ENCODE measurements at regions of chr9 and their contacts with region 1.

Region 1: GRCh38 chr9:133417541-133418461 is at the start of gene REXO4:
- DNase-seq: peak; percentile 86 to 95
- H3K4me3 ChIP-seq: peak within 1 kb of the TSS; percentile 83 to 96 (median 92)
- H3K27ac ChIP-seq: peak within 1 kb of the TSS; percentile 92
- H3K4me1 ChIP-seq: peaks cover 0 to 20% (median 5%) of the 10 kb centered on the region in 4 experiments; a peak in 4 of 7 replicates
- H3K27me3 ChIP-seq: no peaks in the 10 kb centered on the region; a peak in 1 of 7 replicates
- CTCF ChIP-seq: no peak
- EP300 ChIP-seq: no peak
- POLR2A ChIP-seq: peak in 1 of 2 experiments; percentile 58; a peak in 2 of 3 replicates
- RAD21 ChIP-seq: no peak
- total RNA-seq, gene REXO4: 37.7 and 38.3 TPM in 2 replicates

Region 2: DNA sequence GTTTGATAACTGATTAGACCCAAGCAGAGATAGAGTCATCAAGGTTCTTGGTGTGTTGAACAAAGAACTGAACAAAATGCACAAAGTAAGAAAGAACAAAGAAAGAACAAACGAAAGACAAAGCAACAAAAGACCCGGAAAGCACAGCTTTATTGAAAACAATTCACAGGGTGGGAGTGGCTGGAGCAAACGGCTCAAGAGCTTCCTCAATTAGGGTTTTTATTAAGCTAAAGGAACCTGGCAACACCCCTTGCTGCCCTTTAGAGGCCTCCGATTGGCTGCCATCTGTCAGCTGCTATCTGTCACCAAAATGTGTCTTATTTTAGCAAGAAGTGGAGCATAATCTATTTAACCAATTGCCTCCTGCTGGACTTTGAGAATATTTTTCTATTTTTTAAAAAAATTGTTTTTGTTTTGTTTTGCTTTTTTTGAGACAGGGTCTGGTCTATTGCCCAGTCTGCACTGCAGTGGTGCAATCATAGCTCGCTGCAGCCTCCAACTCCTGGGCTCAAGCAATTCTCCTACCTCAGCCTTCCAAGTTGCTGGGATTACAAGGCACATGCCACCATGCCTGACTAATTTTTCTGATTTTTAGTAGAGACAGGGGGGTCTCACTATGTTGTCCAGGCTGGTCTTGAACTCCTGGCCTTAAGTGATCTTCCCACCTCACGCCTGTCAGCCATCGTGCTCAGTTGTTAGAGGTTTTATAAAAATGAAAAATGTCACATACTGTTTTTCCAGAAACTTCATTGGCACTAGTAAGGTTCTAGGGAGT is 135.2 kb before region 1 on chr9:
- CTCF ChIA-PET with region 1: no interaction called
- POLR2A ChIA-PET with region 1: no interaction called
- DNase-seq: no peak
- H3K4me3 ChIP-seq: no peak overlapping the region
- H3K27ac ChIP-seq: no peak overlapping the region
- H3K4me1 ChIP-seq: no peaks in the 10 kb centered on the region
- H3K27me3 ChIP-seq: peaks cover under 1 to 6% (median 4%) of the 10 kb centered on the region in 4 experiments; a peak in 3 of 7 replicates
- CTCF ChIP-seq: no peak
- EP300 ChIP-seq: no peak
- POLR2A ChIP-seq: no peak
- RAD21 ChIP-seq: no peak

Region 3: GRCh38 chr9:133347985-133348717 is 69.7 kb before region 1 on chr9 and contains the starts of genes MED22 and RPL7A:
- CTCF ChIA-PET with region 1: interaction called, 4 read pairs
- POLR2A ChIA-PET with region 1: interaction called, 29 read pairs
- DNase-seq: peak; percentile 77 to 93
- H3K4me3 ChIP-seq: peak within 1 kb of the TSS; percentile 93 to 100 (median 96)
- H3K27ac ChIP-seq: peak within 1 kb of the TSS; percentile 99
- H3K4me1 ChIP-seq: peaks cover 0 to 10% (median 7%) of the 10 kb centered on the region in 4 experiments; a peak in 6 of 7 replicates
- H3K27me3 ChIP-seq: no peaks in the 10 kb centered on the region
- CTCF ChIP-seq: no peak
- EP300 ChIP-seq: no peak
- POLR2A ChIP-seq: peak in 1 of 2 experiments; percentile 97; a peak in 1 of 3 replicates
- RAD21 ChIP-seq: no peak
- total RNA-seq, gene MED22: 56.4 and 61.8 TPM in 2 replicates
- total RNA-seq, gene RPL7A: 2,578 and 2,633 TPM in 2 replicates

Region 4: GRCh38 chr9:133387425-133388079 is 30.2 kb before region 1 on chr9:
- CTCF ChIA-PET with region 1: interaction called, 11 read pairs
- POLR2A ChIA-PET with region 1: interaction called, 3 read pairs
- DNase-seq: no peak
- H3K4me3 ChIP-seq: no peak overlapping the region
- H3K27ac ChIP-seq: no peak overlapping the region
- H3K4me1 ChIP-seq: no peaks in the 10 kb centered on the region; a peak in 1 of 7 replicates
- H3K27me3 ChIP-seq: peaks cover 0 to 2% (median 0%) of the 10 kb centered on the region in 4 experiments; a peak in 2 of 7 replicates
- CTCF ChIP-seq: no peak
- EP300 ChIP-seq: no peak
- POLR2A ChIP-seq: no peak
- RAD21 ChIP-seq: no peak

Region 5: DNA sequence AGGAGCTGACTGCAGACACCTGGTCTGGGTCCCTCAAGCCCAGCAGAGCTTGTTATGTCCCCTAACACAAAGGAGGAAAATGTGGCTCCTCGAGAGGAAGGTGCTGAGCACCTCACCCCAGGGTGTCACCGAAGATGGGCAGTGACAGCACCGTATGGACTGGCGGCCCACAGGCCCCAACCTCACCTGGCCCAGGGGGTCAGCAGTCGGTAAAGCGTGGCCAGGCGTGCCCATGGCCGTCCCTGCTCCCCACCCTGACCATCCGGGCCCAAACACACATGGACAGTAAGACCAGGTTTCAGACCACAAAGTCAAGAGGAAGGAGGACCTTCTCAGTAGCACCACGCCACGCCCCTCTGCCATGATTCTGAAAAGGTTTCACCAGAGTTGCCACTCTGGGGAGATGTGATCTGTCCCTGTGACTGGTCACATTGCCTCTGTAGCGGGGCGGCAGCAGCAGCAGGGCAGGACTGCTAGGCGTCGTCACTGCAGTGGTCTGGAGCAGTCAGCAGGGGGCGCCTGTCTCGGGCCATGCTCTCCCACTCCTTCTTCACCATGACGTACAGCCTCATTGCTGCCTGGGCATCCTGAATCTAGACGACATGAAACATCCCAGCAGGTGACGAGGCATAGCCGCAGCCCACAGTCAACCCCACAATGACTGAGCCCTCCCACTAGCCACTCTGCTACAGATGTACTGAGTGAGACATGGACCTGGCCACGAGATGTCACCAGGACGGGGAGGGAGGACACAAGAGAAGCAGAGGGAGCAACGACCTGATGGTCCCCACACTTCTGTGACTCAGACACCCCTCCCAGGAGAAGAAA is 11.1 kb before region 1 on chr9:
- CTCF ChIA-PET with region 1: interaction called, 16 read pairs
- POLR2A ChIA-PET with region 1: interaction called, 31 read pairs
- DNase-seq: peak; percentile 49 to 89
- H3K4me3 ChIP-seq: no peak overlapping the region
- H3K27ac ChIP-seq: no peak overlapping the region
- H3K4me1 ChIP-seq: no peaks in the 10 kb centered on the region
- H3K27me3 ChIP-seq: no peaks in the 10 kb centered on the region
- CTCF ChIP-seq: peak in 2 of 3 experiments; percentile 86 to 98; a peak in 3 of 4 replicates
- EP300 ChIP-seq: no peak
- POLR2A ChIP-seq: no peak
- RAD21 ChIP-seq: peak; percentile 55 to 60

Region 6: GRCh38 chr9:133443982-133444381 is 26.2 kb after region 1 on chr9:
- CTCF ChIA-PET with region 1: interaction called, 12 read pairs
- POLR2A ChIA-PET with region 1: no interaction called
- DNase-seq: no peak
- H3K4me3 ChIP-seq: no peak overlapping the region
- H3K27ac ChIP-seq: no peak overlapping the region
- H3K4me1 ChIP-seq: no peaks in the 10 kb centered on the region
- H3K27me3 ChIP-seq: no peaks in the 10 kb centered on the region
- CTCF ChIP-seq: no peak
- EP300 ChIP-seq: no peak
- POLR2A ChIP-seq: no peak
- RAD21 ChIP-seq: no peak